Psoas muscle (tissue), 8 donors: ENCODE measurements at regions of chr15 and their contacts with region 1.

Region 1: GRCh38 chr15:83108266-83109226 is 1.1 kb downstream of the TM6SF1 start:
- DNase-seq: peak; percentile 50 to 72
- ATAC-seq: peak; percentile 38 to 44 (median 40)
- H3K4me3 ChIP-seq: peak overlapping the region; percentile 90
- H3K27ac ChIP-seq: peak overlapping the region; percentile 85
- H3K4me1 ChIP-seq: peaks cover 14% of the 10 kb centered on the region
- H3K27me3 ChIP-seq: no peaks in the 10 kb centered on the region
- CTCF ChIP-seq: no peak

Region 2: DNA sequence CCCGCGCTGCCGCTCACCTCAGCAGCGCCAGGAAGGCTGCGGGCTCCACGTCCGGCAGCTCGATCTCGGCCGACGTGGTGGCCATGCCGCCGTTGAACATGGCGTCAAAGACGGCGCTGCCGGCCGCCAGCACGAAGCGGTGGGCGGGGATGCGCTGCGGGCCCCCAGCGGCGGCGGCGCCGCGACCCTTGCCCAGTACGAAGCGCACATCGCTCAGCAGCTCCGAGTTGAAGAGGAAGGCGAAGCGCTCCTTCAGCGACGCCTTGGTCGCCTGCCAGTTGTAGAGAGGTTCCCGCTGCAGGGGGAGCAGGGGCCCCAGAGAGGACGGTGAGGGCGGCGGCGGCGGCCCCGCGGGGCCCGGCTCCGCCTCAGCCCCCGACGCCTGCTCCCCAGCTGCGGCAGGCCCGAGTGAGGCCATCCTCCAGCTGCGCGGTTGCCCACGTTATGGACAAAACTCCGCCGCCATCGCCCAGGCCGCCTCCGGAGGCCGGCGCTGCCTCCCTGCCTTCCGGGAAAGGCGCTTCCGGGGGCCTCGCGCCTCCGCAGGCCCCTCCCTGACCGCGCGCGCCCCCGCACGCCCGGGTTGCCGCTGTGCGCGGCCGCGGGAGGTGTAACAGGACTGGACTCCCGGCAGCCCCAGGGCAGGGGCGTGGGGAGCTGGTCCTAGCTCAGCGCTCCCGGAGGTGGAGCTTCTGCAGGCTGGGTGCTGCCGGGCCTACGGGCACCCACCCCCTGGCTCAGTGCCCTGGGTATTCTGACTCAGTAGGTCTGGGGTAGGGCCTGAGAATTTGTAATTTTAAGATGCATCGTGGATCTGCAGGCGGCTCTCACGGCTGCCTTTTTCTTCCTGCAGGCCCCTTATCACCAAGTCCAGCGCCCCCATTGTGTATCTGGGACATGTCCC is 41.6 kb before region 1 on chr15 and contains the start of gene BTBD1:
- intact Hi-C with region 1: loop called (anchors 5 kb)
- DNase-seq: peak; percentile 96 to 97
- ATAC-seq: peak; percentile 91 to 98 (median 96)
- H3K4me3 ChIP-seq: peak within 1 kb of the TSS; percentile 97
- H3K27ac ChIP-seq: peak within 1 kb of the TSS; percentile 99
- H3K4me1 ChIP-seq: peaks cover 35% of the 10 kb centered on the region
- H3K27me3 ChIP-seq: no peaks in the 10 kb centered on the region
- CTCF ChIP-seq: no peak
- total RNA-seq, gene BTBD1: 133 to 193 (median 157) TPM

Region 3: GRCh38 chr15:83422081-83422480 is 313.5 kb after region 1 on chr15:
- intact Hi-C with region 1: no loop called
- DNase-seq: no peak
- ATAC-seq: no peak
- H3K4me3 ChIP-seq: no peak overlapping the region
- H3K27ac ChIP-seq: no peak overlapping the region
- H3K4me1 ChIP-seq: no peaks in the 10 kb centered on the region
- H3K27me3 ChIP-seq: peaks cover 0 to 7% (median 2%) of the 10 kb centered on the region in 3 donors
- CTCF ChIP-seq: no peak

Region 4: GRCh38 chr15:84023636-84024035 is 915.1 kb after region 1 on chr15:
- intact Hi-C with region 1: no loop called
- DNase-seq: no peak
- ATAC-seq: no peak
- H3K4me3 ChIP-seq: no peak overlapping the region
- H3K27ac ChIP-seq: no peak overlapping the region
- H3K4me1 ChIP-seq: no peaks in the 10 kb centered on the region
- H3K27me3 ChIP-seq: no peaks in the 10 kb centered on the region
- CTCF ChIP-seq: peak; percentile 41